ENCODE measurements at regions of chr5 and their contacts with region 1.

Region 1: GRCh38 chr5:103041071-103041676 is 78.8 kb downstream of the GIN1 start:
- DNase-seq: no peak
- ATAC-seq: peak; percentile 65
- H3K4me3 ChIP-seq: no peak overlapping the region
- H3K27ac ChIP-seq: no peak overlapping the region
- H3K4me1 ChIP-seq: no peaks in the 10 kb centered on the region
- H3K27me3 ChIP-seq: no peaks in the 10 kb centered on the region

Region 2: DNA sequence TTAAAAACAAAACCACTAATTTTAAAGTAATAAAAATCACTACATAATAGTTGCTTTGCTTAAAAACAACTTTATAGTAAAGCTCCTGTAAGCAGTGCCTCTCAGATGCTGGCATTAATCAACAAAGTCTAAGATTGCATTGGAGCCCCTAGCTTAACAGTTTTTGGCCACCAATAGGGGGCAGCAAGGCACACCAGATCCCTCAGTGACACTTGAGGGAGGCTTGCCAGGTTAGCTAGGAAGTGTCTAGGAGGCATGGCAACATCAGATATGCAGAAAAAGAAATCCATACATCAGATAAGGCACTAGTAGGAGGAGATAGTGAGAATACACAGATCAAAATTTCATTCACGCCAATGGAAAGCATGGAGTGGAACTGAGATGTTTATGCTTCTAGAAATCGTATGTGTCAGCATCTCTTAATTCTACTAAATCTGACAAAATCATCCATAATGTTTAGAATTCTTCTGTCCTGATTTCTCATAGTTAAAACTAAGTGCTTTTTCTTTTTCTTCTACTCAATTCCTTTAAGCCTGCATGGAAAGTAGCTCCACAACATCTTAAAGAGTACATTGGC is 359.7 kb before region 1 on chr5:
- intact Hi-C with region 1: loop called (anchors 2 to 5 kb)
- DNase-seq: peak; percentile 69 to 82
- ATAC-seq: peak; percentile 86
- H3K4me3 ChIP-seq: no peak overlapping the region
- H3K27ac ChIP-seq: no peak overlapping the region
- H3K4me1 ChIP-seq: no peaks in the 10 kb centered on the region
- H3K27me3 ChIP-seq: no peaks in the 10 kb centered on the region

Region 3: GRCh38 chr5:103139264-103139865 is 98.2 kb after region 1 on chr5:
- intact Hi-C with region 1: loop called in 1 of 2 experiments (anchors 2 kb)
- DNase-seq: peak; percentile 76 to 81
- ATAC-seq: peak; percentile 92
- H3K4me3 ChIP-seq: no peak overlapping the region
- H3K27ac ChIP-seq: no peak overlapping the region
- H3K4me1 ChIP-seq: no peaks in the 10 kb centered on the region
- H3K27me3 ChIP-seq: no peaks in the 10 kb centered on the region

Measured in aorta (tissue), 5 donors.